Caki2 (cell line): ENCODE measurements at regions of chr2 and their contacts with region 1.

Region 1: DNA sequence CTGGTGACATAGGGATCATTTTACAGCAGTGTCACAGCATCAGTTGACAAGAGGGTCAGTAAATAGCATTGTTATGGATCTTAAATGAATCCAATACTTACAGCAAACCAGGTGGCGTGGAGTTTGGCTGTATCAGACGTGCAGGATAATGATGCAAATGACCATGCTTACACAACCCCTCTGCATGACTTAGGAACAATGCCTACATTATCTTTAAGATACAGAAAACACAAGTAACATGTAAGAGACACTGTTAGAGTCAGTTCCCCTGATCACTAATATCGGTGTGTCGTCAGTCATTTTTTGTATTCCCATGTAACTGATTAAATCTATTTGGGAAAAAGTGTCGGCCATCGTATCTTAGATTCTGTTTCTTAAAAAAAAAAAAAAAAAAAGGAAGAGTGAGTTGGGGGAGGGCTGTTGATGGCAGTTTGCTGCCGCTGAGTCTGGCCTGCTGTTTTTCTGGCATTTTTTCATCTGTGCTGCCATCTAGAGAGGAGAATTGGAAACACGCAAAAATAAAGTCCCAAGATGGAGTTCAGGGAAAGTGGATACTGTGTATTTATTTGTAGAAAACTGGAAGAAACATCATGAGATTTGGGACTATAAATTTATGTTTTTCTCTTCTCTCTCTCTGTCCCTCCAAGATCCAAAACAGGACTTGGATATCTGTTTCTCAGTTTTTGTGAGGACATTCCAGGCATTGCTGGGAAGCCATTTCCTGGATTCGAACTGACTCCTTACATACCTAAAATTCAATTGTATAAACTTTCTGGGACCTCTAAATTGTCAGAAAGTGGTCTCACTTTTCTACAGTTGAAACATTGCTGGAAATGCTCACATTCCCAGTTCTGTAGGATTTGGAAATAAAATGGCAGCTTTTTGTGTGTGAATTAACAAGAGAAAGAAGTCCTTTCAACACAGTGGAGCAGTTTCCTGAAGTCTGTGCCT is 60.3 kb upstream of the AGPS start:
- DNase-seq: peak; percentile 84

Region 2: DNA sequence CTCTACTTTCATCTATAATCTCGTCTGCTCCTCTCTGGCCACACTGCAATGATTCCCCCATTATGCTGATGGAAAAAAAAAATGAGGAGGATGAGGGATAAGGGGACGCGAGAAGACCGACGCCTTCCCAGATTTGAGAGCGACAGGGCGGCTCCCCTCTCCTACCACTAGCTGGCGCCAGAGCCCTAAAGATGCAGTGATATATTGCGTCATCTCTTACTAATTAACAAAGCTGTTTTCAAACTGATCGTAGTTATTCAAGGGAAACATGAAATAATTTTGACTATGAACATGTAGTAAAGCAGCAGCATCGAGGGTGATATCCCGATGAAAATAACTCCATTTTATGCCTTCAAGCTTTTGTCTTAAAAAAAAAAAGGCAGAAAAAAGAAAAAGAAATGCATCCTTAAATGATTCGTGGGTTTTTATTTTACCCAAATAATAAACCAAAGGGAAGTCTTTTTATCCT is 167.7 kb before region 1 on chr2:
- in situ Hi-C with region 1: loop called (anchors 5 kb)
- DNase-seq: peak; percentile 78